Heart right ventricle (tissue), 16 donors: ENCODE measurements at regions of chr15 and their contacts with region 1.

Region 1: GRCh38 chr15:93087825-93088199 is 1.2 kb downstream of the RGMA start:
- DNase-seq: peak; percentile 69 to 71
- ATAC-seq: peak; percentile 62 to 79 (median 70)
- H3K4me3 ChIP-seq: peak overlapping the region; percentile 57 to 73 (median 64)
- H3K27ac ChIP-seq: peak overlapping the region; percentile 74 to 92 (median 84)
- H3K4me1 ChIP-seq: peaks cover 3 to 26% (median 17%) of the 10 kb centered on the region in 9 donors
- H3K27me3 ChIP-seq: peaks cover 0 to 83% (median 20%) of the 10 kb centered on the region in 7 donors
- CTCF ChIP-seq: peak; percentile 82 to 92 (median 87)

Region 2: GRCh38 chr15:93141371-93141794 is 53.6 kb after region 1 on chr15:
- intact Hi-C with region 1: loop called in 1 of 10 experiments (anchors 10 kb)
- DNase-seq: no peak
- ATAC-seq: peak in 1 of 8 donors; percentile 29
- H3K4me3 ChIP-seq: no peak overlapping the region
- H3K27ac ChIP-seq: peak overlapping the region in 1 of 10 donors; percentile 29
- H3K4me1 ChIP-seq: peaks cover 0 to 3% (median 0%) of the 10 kb centered on the region in 9 donors
- H3K27me3 ChIP-seq: no peaks in the 10 kb centered on the region
- CTCF ChIP-seq: no peak

Region 3: DNA sequence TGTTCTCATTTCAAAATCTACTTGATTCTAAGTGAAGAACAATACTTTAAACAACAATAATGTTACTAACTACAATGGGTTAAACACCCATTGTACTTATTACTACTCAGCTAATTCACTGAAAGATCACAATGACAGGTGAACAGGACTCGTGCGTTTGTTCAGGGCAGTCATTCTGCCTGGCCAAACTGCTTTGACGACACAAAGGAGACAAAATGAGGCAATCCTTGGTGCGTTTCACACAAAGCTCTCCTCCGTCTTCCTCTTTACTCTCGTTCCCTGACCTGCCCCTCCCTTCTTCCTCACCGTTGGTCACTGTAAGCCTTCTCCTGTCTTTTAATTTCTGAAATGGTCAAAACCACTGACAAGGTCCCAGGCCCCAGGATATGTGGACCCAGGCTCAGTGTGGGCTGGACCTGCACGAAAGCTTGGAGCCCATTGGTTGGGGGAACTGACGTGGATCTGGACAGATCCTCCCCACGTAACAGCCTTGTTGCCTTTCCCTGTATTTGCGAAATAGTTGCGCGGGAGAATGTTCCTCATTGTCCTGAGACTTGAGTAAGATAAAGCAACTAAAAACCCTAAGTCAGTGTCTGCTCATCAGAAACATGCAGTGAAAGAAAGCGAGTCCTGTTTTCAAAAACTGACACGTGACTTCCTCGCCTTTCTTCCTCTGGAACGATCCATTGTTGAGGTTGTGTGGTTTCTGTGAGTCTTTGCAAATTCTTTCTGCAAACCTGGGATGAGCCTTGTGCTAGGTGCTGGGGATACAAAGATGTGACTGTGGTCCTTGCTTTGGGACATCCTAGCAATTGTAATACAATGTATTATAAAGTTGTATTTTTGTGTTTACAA is 148.3 kb after region 1 on chr15:
- intact Hi-C with region 1: loop called in 1 of 10 experiments (anchors 10 kb)
- DNase-seq: peak in 1 of 2 donors; percentile 41
- ATAC-seq: peak; percentile 34 to 86 (median 72)
- H3K4me3 ChIP-seq: peak overlapping the region in 1 of 10 donors; percentile 15
- H3K27ac ChIP-seq: peak overlapping the region in 2 of 10 donors; percentile 12 to 82
- H3K4me1 ChIP-seq: no peaks in the 10 kb centered on the region
- H3K27me3 ChIP-seq: peaks cover 0 to 3% (median 0%) of the 10 kb centered on the region in 7 donors
- CTCF ChIP-seq: no peak

Region 4: GRCh38 chr15:93479715-93480114 is 391.9 kb after region 1 on chr15:
- intact Hi-C with region 1: loop called in 2 of 10 experiments (anchors 5 to 10 kb)
- DNase-seq: peak; percentile 39 to 62
- ATAC-seq: peak in 7 of 8 donors; percentile 59 to 88 (median 79)
- H3K4me3 ChIP-seq: no peak overlapping the region
- H3K27ac ChIP-seq: peak overlapping the region in 5 of 10 donors; percentile 28 to 61 (median 46)
- H3K4me1 ChIP-seq: peaks cover 0 to 12% (median 0%) of the 10 kb centered on the region in 9 donors
- H3K27me3 ChIP-seq: no peaks in the 10 kb centered on the region
- CTCF ChIP-seq: no peak

Region 5: DNA sequence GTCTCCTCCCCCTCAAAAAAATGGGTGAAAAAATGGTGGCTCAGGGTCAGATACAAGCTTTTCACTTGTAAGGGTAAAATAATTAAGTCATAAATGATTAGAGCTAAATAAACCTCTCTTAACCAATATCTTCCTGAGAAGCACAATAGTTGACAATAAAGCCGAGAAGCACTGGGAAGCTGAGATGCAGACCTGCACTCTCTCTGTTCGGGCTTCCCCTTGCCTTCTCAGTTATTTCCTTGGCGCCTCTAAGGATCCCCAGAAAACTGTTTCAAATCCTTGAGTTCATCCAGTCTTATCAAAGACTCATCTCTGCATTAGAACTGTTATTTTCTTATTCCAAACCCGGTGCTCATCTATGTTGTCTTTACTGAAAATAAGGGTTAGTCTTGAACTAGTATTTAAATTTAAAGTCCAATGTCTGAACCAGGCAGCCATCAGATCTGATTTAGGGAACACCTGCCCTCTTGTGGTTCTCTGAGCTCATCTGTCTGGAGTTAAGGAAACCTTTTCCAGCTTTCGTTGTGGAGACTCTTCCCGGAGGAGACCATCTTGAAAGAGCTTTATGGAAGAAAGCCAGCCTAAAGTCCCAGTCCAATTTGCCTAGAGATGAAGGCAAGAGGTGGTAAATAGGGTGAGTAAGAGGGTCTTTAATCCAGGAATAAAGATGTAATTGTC is 887.1 kb after region 1 on chr15:
- intact Hi-C with region 1: loop called in 3 of 10 experiments (anchors 5 to 10 kb)
- DNase-seq: no peak
- ATAC-seq: peak in 4 of 8 donors; percentile 40 to 59 (median 50)
- H3K4me3 ChIP-seq: no peak overlapping the region
- H3K27ac ChIP-seq: no peak overlapping the region
- H3K4me1 ChIP-seq: peaks cover 0 to 3% (median 0%) of the 10 kb centered on the region in 9 donors
- H3K27me3 ChIP-seq: no peaks in the 10 kb centered on the region
- CTCF ChIP-seq: peak in 7 of 9 donors; percentile 7 to 56 (median 39)